ENCODE measurements at regions of chrX and their contacts with region 1.

Region 1: DNA sequence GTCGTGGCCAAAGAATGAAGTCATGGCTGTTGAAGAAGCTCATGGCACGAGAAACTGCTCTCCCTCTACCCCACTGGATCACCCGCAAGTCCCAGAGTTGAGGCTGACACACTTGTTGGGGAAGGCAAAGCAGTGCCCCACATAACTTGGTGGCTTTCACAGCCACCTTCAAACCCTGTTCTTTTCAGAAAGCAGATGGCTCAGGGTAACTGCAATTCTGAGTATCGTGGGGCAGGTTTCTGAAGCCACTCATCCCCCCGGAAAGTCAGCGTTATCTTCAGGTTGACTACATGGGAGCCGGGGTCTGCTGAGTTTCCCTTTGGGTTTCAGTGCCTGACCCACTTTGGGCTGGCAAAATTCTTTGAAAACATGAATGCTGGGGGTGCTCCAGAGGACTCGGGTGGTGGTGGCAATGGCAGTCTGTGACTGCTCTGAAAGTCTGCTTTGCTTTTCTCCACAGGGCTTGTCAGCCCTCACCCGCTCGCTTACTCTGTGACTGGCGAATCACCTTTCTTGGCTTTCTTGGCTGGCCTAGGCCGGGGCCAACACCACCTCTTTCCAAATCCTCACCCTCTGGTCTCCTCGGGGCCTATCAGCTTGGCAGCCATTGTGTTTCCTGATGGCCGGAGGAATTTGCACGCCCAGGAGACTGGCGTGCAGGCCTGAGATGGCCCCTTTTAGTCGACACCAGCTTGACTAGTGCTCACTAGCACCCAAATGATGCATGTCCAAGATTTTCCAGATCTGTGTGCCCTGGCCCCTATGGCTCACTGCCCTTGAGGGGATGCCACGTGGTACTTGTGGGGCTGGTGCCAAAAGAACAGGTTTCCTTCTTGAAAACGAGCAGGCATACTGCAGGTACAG is 7.3 kb downstream of the PPP1R3F start:
- DNase-seq: no peak
- H3K4me3 ChIP-seq: no peak overlapping the region
- H3K4me3 Mint-ChIP-seq: peak overlapping the region; percentile 25 to 76 (median 66)
- H3K27ac ChIP-seq: peak overlapping the region; percentile 17
- H3K27ac Mint-ChIP-seq: peak overlapping the region; percentile 77 to 95 (median 89)
- H3K4me1 ChIP-seq: peaks cover 92% of the 10 kb centered on the region
- H3K4me1 Mint-ChIP-seq: peaks cover 53 to 91% (median 74%) of the 10 kb centered on the region in 4 donors
- H3K27me3 ChIP-seq: no peaks in the 10 kb centered on the region
- H3K27me3 Mint-ChIP-seq: no peaks in the 10 kb centered on the region

Region 2: GRCh38 chrX:49163555-49164419 is 113.1 kb before region 1 on chrX:
- CTCF ChIA-PET with region 1: no interaction called
- POLR2A ChIA-PET with region 1: interaction called, 11 read pairs
- intact Hi-C with region 1: no loop called
- DNase-seq: peak; percentile 81 to 84 (median 82)
- H3K4me3 ChIP-seq: peak overlapping the region in 1 of 2 donors; percentile 50
- H3K4me3 Mint-ChIP-seq: peak overlapping the region; percentile 70 to 88 (median 80)
- H3K27ac ChIP-seq: peak overlapping the region; percentile 58
- H3K27ac Mint-ChIP-seq: peak overlapping the region; percentile 83 to 95 (median 92)
- H3K4me1 ChIP-seq: peaks cover 41% of the 10 kb centered on the region
- H3K4me1 Mint-ChIP-seq: peaks cover 14 to 41% (median 29%) of the 10 kb centered on the region in 4 donors
- H3K27me3 ChIP-seq: no peaks in the 10 kb centered on the region
- H3K27me3 Mint-ChIP-seq: no peaks in the 10 kb centered on the region

Region 3: DNA sequence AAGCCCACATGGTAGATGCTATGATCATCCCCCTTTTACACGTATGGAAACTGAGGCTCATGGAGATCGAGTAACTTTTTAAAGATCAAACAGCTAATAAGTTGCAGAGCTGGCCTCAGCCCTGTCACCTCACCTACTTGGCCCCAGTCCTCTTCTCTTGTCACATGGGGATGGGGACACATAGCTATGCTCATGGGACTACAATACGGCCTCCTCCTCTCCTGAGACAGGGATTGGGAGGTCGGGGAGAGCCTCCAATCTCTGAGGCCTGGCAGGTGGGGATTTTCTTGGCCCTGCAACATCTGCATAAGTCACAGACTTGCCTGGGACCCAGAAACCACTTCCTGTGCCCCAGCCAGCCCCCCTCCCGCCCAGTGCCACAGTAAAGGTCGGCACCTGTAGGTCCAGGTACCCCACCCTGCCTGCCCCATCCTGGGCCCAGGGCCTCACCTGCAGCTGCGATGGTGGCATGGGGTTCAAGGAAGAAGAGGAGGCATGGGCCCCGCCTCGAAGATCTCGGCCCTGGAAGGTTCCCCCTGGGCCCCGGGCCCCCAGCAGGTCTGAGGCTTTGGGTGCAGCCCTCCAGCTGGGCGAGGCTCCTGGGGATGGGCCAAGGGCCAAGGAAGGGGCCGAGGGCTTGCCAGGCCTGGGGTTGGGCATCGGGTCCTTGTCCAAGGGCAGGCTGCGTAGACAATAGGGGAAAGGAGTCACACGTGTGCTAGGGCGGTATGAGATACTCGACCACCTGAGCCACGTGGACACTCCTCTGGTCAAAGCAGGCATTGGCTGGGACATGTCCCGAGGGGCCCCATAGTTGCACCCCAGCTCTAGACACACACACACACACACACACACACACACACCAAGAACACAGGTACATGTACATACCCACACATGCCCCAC is 18.8 kb before region 1 on chrX:
- CTCF ChIA-PET with region 1: no interaction called
- POLR2A ChIA-PET with region 1: interaction called, 17 read pairs
- intact Hi-C with region 1: no loop called
- DNase-seq: peak in 2 of 5 donors; percentile 23 to 53
- H3K4me3 ChIP-seq: no peak overlapping the region
- H3K4me3 Mint-ChIP-seq: peak overlapping the region in 7 of 8 donors; percentile 13 to 71 (median 49)
- H3K27ac ChIP-seq: peak overlapping the region; percentile 38
- H3K27ac Mint-ChIP-seq: peak overlapping the region; percentile 5 to 91 (median 75)
- H3K4me1 ChIP-seq: peaks cover 43% of the 10 kb centered on the region
- H3K4me1 Mint-ChIP-seq: peaks cover 17 to 40% (median 26%) of the 10 kb centered on the region in 4 donors
- H3K27me3 ChIP-seq: no peaks in the 10 kb centered on the region
- H3K27me3 Mint-ChIP-seq: no peaks in the 10 kb centered on the region

Region 4: GRCh38 chrX:49291615-49292337 is 14.9 kb after region 1 on chrX:
- CTCF ChIA-PET with region 1: interaction called, 9 read pairs
- POLR2A ChIA-PET with region 1: interaction called, 14 read pairs
- intact Hi-C with region 1: no loop called
- DNase-seq: peak; percentile 56 to 64 (median 59)
- H3K4me3 ChIP-seq: no peak overlapping the region
- H3K4me3 Mint-ChIP-seq: peak overlapping the region in 5 of 8 donors; percentile 1 to 84 (median 57)
- H3K27ac ChIP-seq: no peak overlapping the region
- H3K27ac Mint-ChIP-seq: peak overlapping the region in 6 of 7 donors; percentile 10 to 91 (median 74)
- H3K4me1 ChIP-seq: peaks cover 34% of the 10 kb centered on the region
- H3K4me1 Mint-ChIP-seq: peaks cover 22 to 42% (median 29%) of the 10 kb centered on the region in 4 donors
- H3K27me3 ChIP-seq: no peaks in the 10 kb centered on the region
- H3K27me3 Mint-ChIP-seq: no peaks in the 10 kb centered on the region

Region 5: GRCh38 chrX:49309401-49309981 is 32.6 kb after region 1 on chrX:
- CTCF ChIA-PET with region 1: interaction called, 3 read pairs
- POLR2A ChIA-PET with region 1: interaction called, 17 read pairs
- intact Hi-C with region 1: loop called (anchors 5 kb)
- DNase-seq: peak; percentile 28 to 47 (median 40)
- H3K4me3 ChIP-seq: peak overlapping the region; percentile 23 to 57
- H3K4me3 Mint-ChIP-seq: peak overlapping the region; percentile 85 to 94 (median 88)
- H3K27ac ChIP-seq: peak overlapping the region; percentile 47
- H3K27ac Mint-ChIP-seq: peak overlapping the region; percentile 90 to 97 (median 93)
- H3K4me1 ChIP-seq: peaks cover 17% of the 10 kb centered on the region
- H3K4me1 Mint-ChIP-seq: peaks cover 19 to 29% (median 20%) of the 10 kb centered on the region in 4 donors
- H3K27me3 ChIP-seq: no peaks in the 10 kb centered on the region
- H3K27me3 Mint-ChIP-seq: no peaks in the 10 kb centered on the region

Measured in CD4-positive, alpha-beta memory T cell (primary cell).